ENCODE measurements at regions of chr3 and their contacts with region 1.

Region 1: GRCh38 chr3:94009608-94010007 is 18.8 kb downstream of the STX19 start:
- DNase-seq: no peak
- H3K4me3 ChIP-seq: no peak overlapping the region
- H3K27ac ChIP-seq: no peak overlapping the region
- H3K4me1 ChIP-seq: peaks cover 0 to 8% (median 1%) of the 10 kb centered on the region in 4 donors
- H3K27me3 ChIP-seq: no peaks in the 10 kb centered on the region
- CTCF ChIP-seq: no peak
- EP300 ChIP-seq: no peak
- POLR2A ChIP-seq: no peak

Region 2: DNA sequence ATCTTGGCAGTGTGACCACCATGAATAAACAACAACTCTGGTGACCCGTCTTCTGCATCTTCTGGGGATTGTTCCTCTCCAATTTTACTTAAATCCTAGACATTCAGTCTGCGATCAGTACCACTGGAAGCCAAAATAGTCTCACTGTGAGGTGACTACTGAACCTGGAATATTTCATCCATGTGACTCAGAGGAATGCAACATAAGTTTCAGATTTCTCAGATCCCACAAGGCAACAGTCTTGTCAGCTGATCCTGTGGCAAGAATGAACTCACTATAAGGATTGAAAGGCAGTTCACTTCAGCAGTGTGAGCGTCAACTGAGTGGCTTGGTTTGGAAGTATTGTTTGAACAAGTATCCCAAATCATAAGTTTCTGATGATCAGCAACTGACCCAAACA is 66.4 kb after region 1 on chr3:
- in situ Hi-C with region 1: loop called in 1 of 4 experiments (anchors 5 kb)
- intact Hi-C with region 1: no loop called
- DNase-seq: no peak
- H3K4me3 ChIP-seq: no peak overlapping the region
- H3K27ac ChIP-seq: no peak overlapping the region
- H3K4me1 ChIP-seq: peaks cover 4 to 11% (median 6%) of the 10 kb centered on the region in 4 donors
- H3K27me3 ChIP-seq: no peaks in the 10 kb centered on the region
- CTCF ChIP-seq: no peak
- EP300 ChIP-seq: no peak
- POLR2A ChIP-seq: no peak